Activated CD4-positive, alpha-beta memory T cell treated with anti-CD3 and anti-CD28 coated beads for 36 hours (primary cell): ENCODE measurements at regions of chr5 and their contacts with region 1.

Region 1: GRCh38 chr5:103224118-103224893 is 34.3 kb upstream of the MACIR start:
- DNase-seq: peak; percentile 34
- H3K4me3 Mint-ChIP-seq: no peak overlapping the region
- H3K27ac Mint-ChIP-seq: no peak overlapping the region
- H3K4me1 Mint-ChIP-seq: no peaks in the 10 kb centered on the region
- H3K27me3 Mint-ChIP-seq: peaks cover 23% of the 10 kb centered on the region

Region 2: DNA sequence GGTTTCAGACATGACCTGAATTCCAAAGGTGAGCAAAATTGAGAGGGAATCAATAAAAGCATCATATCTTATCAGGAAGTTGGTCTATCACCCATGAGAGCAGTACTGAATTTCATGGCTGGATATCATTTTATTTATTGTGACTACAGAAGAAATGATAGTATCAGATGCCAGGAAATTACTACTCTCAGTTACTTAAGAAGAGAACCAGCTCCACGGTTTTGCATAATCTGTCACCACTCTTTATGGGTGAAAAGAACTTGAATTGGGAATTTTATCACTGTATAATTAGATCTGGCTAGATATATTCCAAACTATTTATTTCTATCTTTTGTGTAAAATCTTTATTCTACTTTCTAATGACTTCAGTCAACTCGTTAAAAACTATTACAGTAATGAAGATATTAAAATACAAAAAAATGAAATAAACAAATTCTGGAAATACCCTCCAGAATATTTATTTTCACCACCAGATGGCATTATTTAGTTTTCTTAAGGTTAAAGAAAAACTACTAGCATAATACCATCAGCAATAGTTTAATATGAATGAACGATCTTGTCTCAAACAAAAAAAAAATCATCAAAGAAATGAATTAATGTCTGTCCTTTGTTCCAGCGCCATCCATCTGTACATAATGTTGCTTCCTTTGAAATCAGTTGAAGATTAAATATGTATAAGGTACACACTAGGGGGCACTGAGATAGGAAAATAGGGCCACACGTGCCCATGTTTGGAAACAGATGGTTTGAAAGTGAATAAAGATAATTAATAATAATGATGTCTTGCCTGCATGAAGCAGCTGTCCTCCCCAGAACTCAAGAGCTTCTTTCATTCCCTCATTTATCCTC is 640.8 kb before region 1 on chr5:
- CTCF ChIA-PET with region 1: interaction called, 3 read pairs
- POLR2A ChIA-PET with region 1: no interaction called
- intact Hi-C with region 1: loop called (anchors 1 kb)
- DNase-seq: no peak
- H3K4me3 Mint-ChIP-seq: no peak overlapping the region
- H3K27ac Mint-ChIP-seq: no peak overlapping the region
- H3K4me1 Mint-ChIP-seq: peaks cover 1% of the 10 kb centered on the region
- H3K27me3 Mint-ChIP-seq: peaks cover 8% of the 10 kb centered on the region

Region 3: DNA sequence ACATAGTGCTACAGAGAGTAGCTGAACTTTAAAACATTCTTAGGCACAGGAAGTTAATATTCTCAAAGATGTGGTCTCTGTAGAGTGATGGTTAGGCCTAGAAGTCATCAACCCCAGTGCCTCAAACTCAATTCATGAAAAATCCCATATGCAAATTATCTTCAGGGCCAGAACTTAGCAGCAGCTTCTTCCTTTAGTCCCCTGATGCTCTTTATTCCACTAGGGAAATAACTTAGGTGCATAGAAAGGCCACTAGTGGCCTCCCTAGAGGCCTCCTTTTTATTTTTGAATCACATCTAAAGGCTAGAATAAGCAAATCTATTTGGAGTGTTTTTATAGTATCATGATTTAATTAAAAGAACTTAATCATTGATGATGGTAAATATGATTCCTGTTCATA is 192.7 kb before region 1 on chr5:
- CTCF ChIA-PET with region 1: interaction called, 4 read pairs
- POLR2A ChIA-PET with region 1: no interaction called
- intact Hi-C with region 1: loop called (anchors 10 kb)
- DNase-seq: no peak
- H3K4me3 Mint-ChIP-seq: no peak overlapping the region
- H3K27ac Mint-ChIP-seq: no peak overlapping the region
- H3K4me1 Mint-ChIP-seq: no peaks in the 10 kb centered on the region
- H3K27me3 Mint-ChIP-seq: no peaks in the 10 kb centered on the region

Region 4: GRCh38 chr5:103066326-103066725 is 158.0 kb before region 1 on chr5:
- CTCF ChIA-PET with region 1: no interaction called
- POLR2A ChIA-PET with region 1: no interaction called
- intact Hi-C with region 1: no loop called
- DNase-seq: no peak
- H3K4me3 Mint-ChIP-seq: no peak overlapping the region
- H3K27ac Mint-ChIP-seq: no peak overlapping the region
- H3K4me1 Mint-ChIP-seq: no peaks in the 10 kb centered on the region
- H3K27me3 Mint-ChIP-seq: no peaks in the 10 kb centered on the region

Region 5: DNA sequence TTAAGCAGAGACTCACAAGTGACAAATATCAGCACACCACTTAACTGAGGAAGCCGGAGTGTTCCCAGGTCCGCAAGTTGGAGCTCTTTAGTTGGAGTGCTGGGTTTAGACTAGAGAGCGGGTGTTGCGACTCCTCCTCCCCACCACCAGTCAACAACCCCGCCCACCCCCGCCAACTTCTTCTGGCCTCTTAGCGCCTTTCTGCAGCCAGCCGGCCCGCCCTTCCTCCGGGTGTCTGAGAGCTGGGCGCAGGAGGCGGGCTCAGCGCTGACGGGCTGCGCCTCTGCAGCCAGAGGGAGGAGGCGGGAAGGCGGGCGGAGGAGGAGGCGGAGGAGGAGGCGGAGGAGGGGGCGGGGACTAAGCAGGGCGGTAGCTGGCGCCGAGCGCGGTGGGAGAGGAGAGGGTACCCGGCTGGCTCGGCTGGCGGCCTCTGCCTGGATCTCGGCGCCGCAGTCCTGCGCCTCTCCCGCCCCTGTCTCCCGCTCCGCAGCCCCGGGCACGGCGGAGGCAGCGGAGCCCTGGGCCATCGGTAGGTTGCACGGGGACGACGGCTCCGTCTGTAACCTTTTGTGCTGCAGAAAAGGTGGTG is 34.2 kb after region 1 on chr5 and contains the start of gene MACIR:
- CTCF ChIA-PET with region 1: interaction called, 11 read pairs
- POLR2A ChIA-PET with region 1: interaction called, 3 read pairs
- intact Hi-C with region 1: no loop called
- DNase-seq: peak; percentile 95
- H3K4me3 Mint-ChIP-seq: peak within 1 kb of the TSS; percentile 77
- H3K27ac Mint-ChIP-seq: no peak within 1 kb of the TSS
- H3K4me1 Mint-ChIP-seq: peaks cover 27% of the 10 kb centered on the region
- H3K27me3 Mint-ChIP-seq: peaks cover 6% of the 10 kb centered on the region
- total RNA-seq, gene MACIR: 6.6 to 7.4 TPM

Region 6: GRCh38 chr5:103271570-103272289 is 47.4 kb after region 1 on chr5:
- CTCF ChIA-PET with region 1: no interaction called
- POLR2A ChIA-PET with region 1: no interaction called
- intact Hi-C with region 1: no loop called
- DNase-seq: no peak
- H3K4me3 Mint-ChIP-seq: no peak overlapping the region
- H3K27ac Mint-ChIP-seq: no peak overlapping the region
- H3K4me1 Mint-ChIP-seq: peaks cover 18% of the 10 kb centered on the region
- H3K27me3 Mint-ChIP-seq: no peaks in the 10 kb centered on the region

Region 7: GRCh38 chr5:103327893-103328292 is 103.6 kb after region 1 on chr5:
- CTCF ChIA-PET with region 1: no interaction called
- POLR2A ChIA-PET with region 1: no interaction called
- intact Hi-C with region 1: no loop called
- DNase-seq: no peak
- H3K4me3 Mint-ChIP-seq: no peak overlapping the region
- H3K27ac Mint-ChIP-seq: no peak overlapping the region
- H3K4me1 Mint-ChIP-seq: no peaks in the 10 kb centered on the region
- H3K27me3 Mint-ChIP-seq: peaks cover 8% of the 10 kb centered on the region